Right cardiac atrium (tissue), 5 donors: ENCODE measurements at regions of chr5 and their contacts with region 1.

Region 1: DNA sequence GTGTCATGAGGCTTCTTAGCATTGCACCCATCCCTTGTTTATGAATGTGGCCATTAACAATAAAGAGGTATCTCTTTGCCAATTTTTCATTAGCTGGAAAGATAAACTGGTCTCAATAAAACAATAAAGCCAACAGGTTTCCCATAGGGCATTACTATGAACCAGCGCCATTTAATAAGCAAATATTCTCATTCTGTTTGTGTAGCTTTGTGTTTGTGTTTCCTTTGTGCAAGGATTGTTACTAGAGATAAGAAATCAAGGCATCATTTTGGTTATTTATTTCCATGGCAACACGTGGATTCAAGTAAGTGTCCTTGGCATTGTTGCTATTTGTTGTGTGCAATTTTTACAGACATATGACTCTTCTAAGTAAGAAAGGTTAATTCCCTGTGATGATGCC is 37.5 kb upstream of the CAST start:
- DNase-seq: no peak
- ATAC-seq: no peak
- H3K4me3 ChIP-seq: no peak overlapping the region
- H3K27ac ChIP-seq: no peak overlapping the region
- H3K4me1 ChIP-seq: peaks cover 8% of the 10 kb centered on the region
- H3K27me3 ChIP-seq: no peaks in the 10 kb centered on the region

Region 2: GRCh38 chr5:96662725-96663513 is 38.3 kb after region 1 on chr5:
- intact Hi-C with region 1: loop called in 1 of 4 experiments (anchors 5 kb)
- DNase-seq: peak; percentile 94 to 98 (median 98)
- ATAC-seq: peak; percentile 95
- H3K4me3 ChIP-seq: peak overlapping the region; percentile 78
- H3K27ac ChIP-seq: peak overlapping the region; percentile 96
- H3K4me1 ChIP-seq: no peaks in the 10 kb centered on the region
- H3K27me3 ChIP-seq: no peaks in the 10 kb centered on the region